Posterior cingulate gyrus (tissue), 11 donors: ENCODE measurements at regions of chr17 and their contacts with region 1.

Region 1: DNA sequence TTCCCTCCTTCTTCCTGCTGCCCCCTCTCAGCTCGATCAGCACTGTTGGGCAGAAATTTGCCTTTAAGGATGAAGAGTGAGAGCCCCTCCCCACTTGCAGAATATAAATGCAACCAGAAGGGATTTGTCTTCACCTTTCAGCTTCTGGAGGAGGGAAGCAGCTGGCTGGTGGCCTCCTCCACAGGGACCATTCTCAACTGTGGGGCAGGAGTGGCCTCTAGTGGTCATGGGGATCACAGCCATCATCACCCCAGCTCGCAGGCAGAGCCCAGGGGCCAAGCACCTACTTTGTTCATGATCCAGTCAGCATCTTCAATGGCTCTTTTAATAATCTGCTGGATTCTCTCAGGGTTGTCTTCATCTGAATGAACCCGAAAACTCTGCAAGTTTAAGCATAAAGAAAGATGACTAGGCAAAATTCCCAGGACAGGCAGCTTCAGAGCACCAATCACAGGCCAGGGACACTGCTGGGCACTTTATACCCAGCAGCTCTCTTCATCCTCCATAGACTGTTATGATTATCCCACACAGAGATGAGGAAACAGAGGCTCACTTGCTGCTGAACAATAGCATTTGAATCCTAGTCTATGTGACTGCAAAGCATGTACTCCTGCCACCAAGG is 13.1 kb downstream of the LYRM9 start:
- DNase-seq: peak; percentile 65 to 96 (median 83)

Region 2: GRCh38 chr17:27760069-27760885 is 119.8 kb before region 1 on chr17:
- intact Hi-C with region 1: loop called (anchors 1 kb)
- DNase-seq: peak; percentile 47 to 93 (median 74)

Region 3: GRCh38 chr17:27805520-27806146 is 74.5 kb before region 1 on chr17:
- intact Hi-C with region 1: loop called (anchors 1 kb)
- DNase-seq: peak; percentile 70 to 97 (median 86)